ENCODE measurements at regions of chr2 and their contacts with region 1.

Region 1: DNA sequence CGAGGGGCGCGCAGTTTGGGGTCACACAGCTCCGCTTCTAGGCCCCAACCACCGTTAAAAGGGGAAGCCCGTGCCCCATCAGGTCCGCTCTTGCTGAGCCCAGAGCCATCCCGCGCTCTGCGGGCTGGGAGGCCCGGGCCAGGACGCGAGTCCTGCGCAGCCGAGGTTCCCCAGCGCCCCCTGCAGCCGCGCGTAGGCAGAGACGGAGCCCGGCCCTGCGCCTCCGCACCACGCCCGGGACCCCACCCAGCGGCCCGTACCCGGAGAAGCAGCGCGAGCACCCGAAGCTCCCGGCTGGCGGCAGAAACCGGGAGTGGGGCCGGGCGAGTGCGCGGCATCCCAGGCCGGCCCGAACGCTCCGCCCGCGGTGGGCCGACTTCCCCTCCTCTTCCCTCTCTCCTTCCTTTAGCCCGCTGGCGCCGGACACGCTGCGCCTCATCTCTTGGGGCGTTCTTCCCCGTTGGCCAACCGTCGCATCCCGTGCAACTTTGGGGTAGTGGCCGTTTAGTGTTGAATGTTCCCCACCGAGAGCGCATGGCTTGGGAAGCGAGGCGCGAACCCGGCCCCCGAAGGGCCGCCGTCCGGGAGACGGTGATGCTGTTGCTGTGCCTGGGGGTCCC is at the start of gene ITGA4:
- DNase-seq: peak; percentile 93
- ATAC-seq: peak; percentile 86
- H3K4me3 Mint-ChIP-seq: peak within 1 kb of the TSS; percentile 91
- H3K27ac Mint-ChIP-seq: peak within 1 kb of the TSS; percentile 95
- H3K4me1 Mint-ChIP-seq: peaks cover 53% of the 10 kb centered on the region
- H3K27me3 Mint-ChIP-seq: no peaks in the 10 kb centered on the region
- total RNA-seq, gene ITGA4: 27.7 to 33.6 TPM

Region 2: GRCh38 chr2:181077128-181077709 is 380.0 kb before region 1 on chr2:
- CTCF ChIA-PET with region 1: interaction called, 3 read pairs
- POLR2A ChIA-PET with region 1: interaction called, 5 read pairs
- intact Hi-C with region 1: loop called in 1 of 2 experiments (anchors 2 kb)
- DNase-seq: no peak
- ATAC-seq: peak; percentile 90
- H3K4me3 Mint-ChIP-seq: no peak overlapping the region
- H3K27ac Mint-ChIP-seq: no peak overlapping the region
- H3K4me1 Mint-ChIP-seq: peaks cover 5% of the 10 kb centered on the region
- H3K27me3 Mint-ChIP-seq: no peaks in the 10 kb centered on the region

Region 3: GRCh38 chr2:181123798-181124231 is 333.4 kb before region 1 on chr2:
- CTCF ChIA-PET with region 1: interaction called, 3 read pairs
- POLR2A ChIA-PET with region 1: no interaction called
- intact Hi-C with region 1: loop called (anchors 5 kb)
- DNase-seq: peak; percentile 61
- ATAC-seq: peak; percentile 95
- H3K4me3 Mint-ChIP-seq: peak overlapping the region; percentile 58
- H3K27ac Mint-ChIP-seq: peak overlapping the region; percentile 85
- H3K4me1 Mint-ChIP-seq: peaks cover 58% of the 10 kb centered on the region
- H3K27me3 Mint-ChIP-seq: no peaks in the 10 kb centered on the region

Region 4: DNA sequence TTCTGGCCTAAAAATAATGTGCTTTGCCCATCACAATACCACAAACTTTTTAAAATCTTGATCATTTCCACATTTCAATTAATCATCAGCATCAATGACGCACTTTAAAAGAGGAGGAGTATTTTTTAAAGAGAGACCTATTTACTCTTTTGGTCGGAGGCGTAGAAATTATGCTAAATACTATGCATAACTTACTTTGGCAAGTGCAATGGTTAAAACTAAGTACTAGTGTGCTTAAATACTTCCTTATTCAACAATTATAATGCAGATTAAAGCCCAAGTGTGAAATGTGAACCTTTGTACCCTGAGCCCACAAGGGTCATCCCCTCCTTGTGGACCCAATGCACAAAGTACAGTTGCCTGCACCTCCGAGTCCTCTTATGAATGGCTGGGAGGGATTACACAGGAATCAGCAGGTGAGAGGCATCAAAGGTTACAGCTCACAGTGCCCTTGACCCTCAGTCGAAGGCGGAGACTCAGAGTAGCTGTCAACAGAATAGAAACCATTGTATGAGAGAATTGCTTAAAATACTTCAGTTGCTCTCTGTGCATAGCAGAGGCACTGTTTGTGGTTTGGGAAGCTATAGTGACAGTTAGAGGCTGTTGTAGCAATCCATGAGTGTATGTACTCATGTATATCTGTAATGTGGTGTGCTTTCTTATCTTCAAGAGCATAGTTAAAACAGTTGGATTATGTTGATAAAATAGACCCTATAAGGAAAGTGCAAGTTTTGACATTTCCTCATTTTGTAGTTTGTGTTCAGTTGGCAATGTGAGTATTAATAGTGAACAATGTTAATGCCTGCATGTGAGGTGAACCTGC is 151.7 kb before region 1 on chr2:
- CTCF ChIA-PET with region 1: interaction called, 3 read pairs
- POLR2A ChIA-PET with region 1: no interaction called
- intact Hi-C with region 1: loop called (anchors 1 to 2 kb)
- DNase-seq: peak; percentile 63
- ATAC-seq: peak; percentile 84
- H3K4me3 Mint-ChIP-seq: peak overlapping the region; percentile 60
- H3K27ac Mint-ChIP-seq: peak overlapping the region; percentile 91
- H3K4me1 Mint-ChIP-seq: peaks cover 74% of the 10 kb centered on the region
- H3K27me3 Mint-ChIP-seq: no peaks in the 10 kb centered on the region

Region 5: DNA sequence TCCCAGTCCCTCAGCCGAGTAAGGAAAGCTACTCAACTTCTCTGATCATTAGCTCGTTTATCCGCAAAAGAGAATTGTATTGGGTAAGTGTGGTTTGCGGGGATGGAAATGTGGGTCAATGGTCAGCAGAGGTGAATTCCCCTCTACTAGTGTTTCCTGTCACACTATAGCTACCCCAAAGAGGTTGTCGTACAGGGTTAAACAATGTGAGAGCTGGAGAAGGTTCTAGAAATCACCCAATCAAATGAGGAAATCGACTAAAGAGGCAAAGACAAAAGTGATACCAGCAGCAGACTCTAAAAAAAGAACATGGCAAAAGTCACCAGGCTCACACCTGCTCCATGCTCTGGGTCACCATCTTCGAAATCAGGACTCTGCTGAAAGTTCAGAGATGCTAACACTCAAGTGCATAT is 144.7 kb before region 1 on chr2:
- CTCF ChIA-PET with region 1: interaction called, 6 read pairs
- POLR2A ChIA-PET with region 1: no interaction called
- intact Hi-C with region 1: loop called in 1 of 2 experiments (anchors 1 kb)
- DNase-seq: peak; percentile 49
- ATAC-seq: peak; percentile 62
- H3K4me3 Mint-ChIP-seq: peak overlapping the region; percentile 68
- H3K27ac Mint-ChIP-seq: peak overlapping the region; percentile 92
- H3K4me1 Mint-ChIP-seq: peaks cover 56% of the 10 kb centered on the region
- H3K27me3 Mint-ChIP-seq: no peaks in the 10 kb centered on the region

Region 6: DNA sequence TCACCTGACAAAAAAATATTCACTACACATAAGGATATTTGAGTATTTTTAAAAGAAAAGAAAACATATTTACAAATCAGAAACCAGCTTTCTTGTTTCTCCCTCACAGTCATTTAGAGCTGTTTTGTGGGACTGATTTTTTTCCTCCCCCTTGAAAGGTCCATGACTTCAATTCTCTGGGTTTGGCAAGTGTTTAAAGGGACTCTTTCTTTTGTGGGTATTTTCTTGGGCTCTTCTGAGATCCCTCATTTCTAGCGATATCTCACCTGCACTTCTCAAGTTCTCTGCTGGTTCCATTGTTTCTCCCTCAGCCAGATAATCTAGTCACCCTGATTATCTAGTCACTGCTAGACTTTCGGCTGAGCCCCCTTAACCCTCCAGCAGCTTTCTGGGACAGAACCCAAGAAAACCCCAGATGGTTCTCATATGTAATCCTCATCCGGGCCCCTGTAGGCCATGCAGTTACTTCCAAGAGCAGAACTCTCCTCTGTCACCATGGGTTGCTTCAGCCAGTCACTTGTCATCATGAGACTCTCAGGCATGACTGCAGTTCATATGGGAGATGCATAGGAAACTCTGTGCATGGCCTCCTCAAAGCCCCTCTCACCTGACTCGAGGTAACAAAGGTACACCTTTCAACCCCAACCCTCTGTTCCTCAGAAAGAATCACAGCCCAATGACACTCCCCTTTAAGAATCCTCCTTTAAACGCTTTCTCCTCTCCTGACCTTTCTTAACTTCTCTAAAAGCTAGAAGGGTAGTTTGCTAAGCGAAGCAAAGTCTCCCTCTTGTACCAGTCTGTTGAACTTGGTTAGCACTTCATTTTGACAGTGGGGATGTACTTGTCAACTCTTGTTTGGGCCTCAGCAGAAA is 36.7 kb before region 1 on chr2:
- CTCF ChIA-PET with region 1: interaction called, 3 read pairs
- POLR2A ChIA-PET with region 1: no interaction called
- intact Hi-C with region 1: loop called in 1 of 2 experiments (anchors 5 kb)
- DNase-seq: no peak
- ATAC-seq: peak; percentile 37
- H3K4me3 Mint-ChIP-seq: no peak overlapping the region
- H3K27ac Mint-ChIP-seq: peak overlapping the region; percentile 62
- H3K4me1 Mint-ChIP-seq: peaks cover 20% of the 10 kb centered on the region
- H3K27me3 Mint-ChIP-seq: no peaks in the 10 kb centered on the region

Region 7: DNA sequence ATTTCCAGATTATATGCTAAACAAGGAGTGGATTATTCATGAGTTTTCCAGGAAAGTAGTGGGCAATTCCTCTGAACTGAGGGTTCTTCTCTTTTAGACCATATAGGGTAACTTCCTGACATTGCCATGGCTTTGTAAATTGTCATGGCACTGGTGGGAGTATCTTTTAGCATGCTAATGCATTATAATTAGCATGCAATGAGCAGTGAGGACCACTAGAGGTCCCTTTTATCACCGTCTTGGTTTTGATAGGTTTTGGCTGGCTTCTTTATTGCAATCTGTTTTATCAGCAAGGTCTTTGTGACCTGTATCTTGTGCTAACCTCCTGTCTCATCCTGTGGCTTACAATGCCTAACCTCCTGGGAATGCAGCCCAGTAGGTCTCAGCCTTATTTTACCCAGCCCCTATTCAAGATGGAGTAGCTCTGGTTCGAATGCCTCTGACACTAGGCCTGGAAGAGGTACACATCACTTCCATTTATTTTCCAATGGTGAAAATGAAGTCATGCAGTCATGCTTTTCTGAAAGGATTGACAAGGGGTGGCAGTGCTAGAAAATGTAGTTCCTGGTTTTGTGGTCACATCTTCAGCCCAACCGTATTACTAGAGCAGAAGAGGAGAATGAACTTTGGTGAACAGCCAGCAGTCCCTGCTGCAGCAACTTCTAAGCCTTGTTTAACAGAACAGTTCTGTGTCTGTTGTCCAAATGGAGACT is 26.7 kb before region 1 on chr2:
- CTCF ChIA-PET with region 1: interaction called, 10 read pairs
- POLR2A ChIA-PET with region 1: interaction called, 3 read pairs
- intact Hi-C with region 1: loop called (anchors 1 to 2 kb)
- DNase-seq: peak; percentile 9
- ATAC-seq: peak; percentile 75
- H3K4me3 Mint-ChIP-seq: no peak overlapping the region
- H3K27ac Mint-ChIP-seq: peak overlapping the region; percentile 63
- H3K4me1 Mint-ChIP-seq: peaks cover 24% of the 10 kb centered on the region
- H3K27me3 Mint-ChIP-seq: no peaks in the 10 kb centered on the region

Region 8: DNA sequence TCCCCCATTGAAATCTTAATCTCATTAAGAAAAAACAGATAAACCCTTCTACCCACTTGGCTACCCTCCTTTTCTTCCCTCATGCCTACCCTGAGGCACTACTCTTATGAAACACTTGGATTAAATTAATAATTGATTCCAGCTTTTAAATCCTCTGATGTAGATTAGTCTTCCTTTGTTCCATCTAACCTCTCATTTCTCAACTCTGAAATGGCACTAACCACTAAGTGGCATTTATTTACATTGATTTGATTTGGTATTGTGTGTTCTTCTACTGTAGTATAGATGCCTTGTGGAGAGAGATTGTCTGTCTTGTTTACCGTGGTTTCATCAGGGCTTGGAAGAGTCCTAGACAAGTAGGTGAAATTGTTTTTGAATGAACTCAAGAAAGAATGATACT is 26.6 kb after region 1 on chr2:
- CTCF ChIA-PET with region 1: no interaction called
- POLR2A ChIA-PET with region 1: no interaction called
- intact Hi-C with region 1: no loop called
- DNase-seq: no peak
- ATAC-seq: no peak
- H3K4me3 Mint-ChIP-seq: no peak overlapping the region
- H3K27ac Mint-ChIP-seq: no peak overlapping the region
- H3K4me1 Mint-ChIP-seq: no peaks in the 10 kb centered on the region
- H3K27me3 Mint-ChIP-seq: no peaks in the 10 kb centered on the region

Region 9: GRCh38 chr2:181499231-181499630 is 42.0 kb after region 1 on chr2:
- CTCF ChIA-PET with region 1: no interaction called
- POLR2A ChIA-PET with region 1: no interaction called
- intact Hi-C with region 1: no loop called
- DNase-seq: no peak
- ATAC-seq: no peak
- H3K4me3 Mint-ChIP-seq: no peak overlapping the region
- H3K27ac Mint-ChIP-seq: no peak overlapping the region
- H3K4me1 Mint-ChIP-seq: no peaks in the 10 kb centered on the region
- H3K27me3 Mint-ChIP-seq: no peaks in the 10 kb centered on the region

Region 10: GRCh38 chr2:181697571-181697970 is 240.3 kb after region 1 on chr2:
- CTCF ChIA-PET with region 1: no interaction called
- POLR2A ChIA-PET with region 1: no interaction called
- intact Hi-C with region 1: no loop called
- DNase-seq: no peak
- ATAC-seq: no peak
- H3K4me3 Mint-ChIP-seq: no peak overlapping the region
- H3K27ac Mint-ChIP-seq: no peak overlapping the region
- H3K4me1 Mint-ChIP-seq: no peaks in the 10 kb centered on the region
- H3K27me3 Mint-ChIP-seq: peaks cover 16% of the 10 kb centered on the region

Region 11: DNA sequence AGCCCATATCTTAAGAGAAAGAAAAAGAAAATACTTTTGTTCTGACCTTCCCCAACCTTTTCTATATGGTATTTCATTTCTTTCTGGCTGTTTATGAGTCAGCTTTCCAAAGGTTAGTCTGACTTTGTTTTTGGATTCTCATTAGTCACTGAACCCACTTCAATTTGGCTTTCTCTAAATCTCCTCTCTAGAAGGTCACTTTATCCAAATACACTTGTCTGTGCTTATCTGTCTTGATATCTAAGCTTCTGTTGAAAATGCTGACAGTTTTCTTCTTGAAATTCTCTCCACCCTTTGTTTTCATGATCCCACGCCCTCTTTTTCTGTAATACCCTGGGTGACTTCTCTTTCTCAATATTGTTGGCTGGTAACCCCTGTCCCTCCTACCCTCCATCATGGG is 563.5 kb after region 1 on chr2:
- CTCF ChIA-PET with region 1: no interaction called
- POLR2A ChIA-PET with region 1: no interaction called
- intact Hi-C with region 1: no loop called
- DNase-seq: no peak
- ATAC-seq: peak; percentile 12
- H3K4me3 Mint-ChIP-seq: no peak overlapping the region
- H3K27ac Mint-ChIP-seq: no peak overlapping the region
- H3K4me1 Mint-ChIP-seq: peaks cover 1% of the 10 kb centered on the region
- H3K27me3 Mint-ChIP-seq: peaks cover 2% of the 10 kb centered on the region